PC-9 (cell line): ENCODE measurements at regions of chr1 and their contacts with region 1.

Region 1: GRCh38 chr1:100909018-100909417 is 13.1 kb downstream of the SLC30A7 start:
- DNase-seq: no peak
- H3K4me3 ChIP-seq: no peak overlapping the region
- H3K27ac ChIP-seq: no peak overlapping the region
- H3K4me1 ChIP-seq: no peaks in the 10 kb centered on the region
- H3K27me3 ChIP-seq: no peaks in the 10 kb centered on the region
- CTCF ChIP-seq: no peak

Region 2: DNA sequence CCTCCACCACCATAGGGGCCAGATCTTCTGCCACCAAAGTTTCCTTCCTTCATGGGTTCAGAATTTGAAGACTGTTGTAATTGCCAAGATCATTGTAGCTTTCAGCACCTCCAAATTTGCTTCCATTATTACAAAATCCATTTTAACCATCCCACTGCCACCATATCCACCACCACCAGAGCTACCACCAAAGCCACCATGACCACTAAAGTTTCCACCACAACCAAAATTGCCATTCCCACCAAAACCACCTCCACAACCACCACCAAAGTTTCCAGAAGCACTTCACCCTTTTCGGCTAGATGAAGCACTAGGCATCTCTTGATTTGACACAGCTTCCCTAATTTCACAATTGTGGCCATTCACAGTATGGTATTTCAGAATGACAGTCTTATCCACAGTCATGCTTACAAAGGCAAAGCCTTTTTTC is 32.1 kb after region 1 on chr1:
- CTCF ChIA-PET with region 1: no interaction called
- POLR2A ChIA-PET with region 1: interaction called, 24 read pairs
- intact Hi-C with region 1: no loop called
- DNase-seq: peak in 1 of 2 experiments; percentile 21
- H3K4me3 ChIP-seq: no peak overlapping the region
- H3K27ac ChIP-seq: no peak overlapping the region
- H3K4me1 ChIP-seq: peaks cover 5% of the 10 kb centered on the region; the same call in 1 of the 2 replicates
- H3K27me3 ChIP-seq: no peaks in the 10 kb centered on the region
- CTCF ChIP-seq: no peak